ENCODE measurements at regions of chr6 and their contacts with region 1.

Region 1: GRCh38 chr6:4923081-4923480 is 80.8 kb downstream of the RPP40 start:
- DNase-seq: no peak
- ATAC-seq: no peak
- H3K4me3 ChIP-seq: no peak overlapping the region
- H3K27ac ChIP-seq: no peak overlapping the region
- H3K4me1 ChIP-seq: no peaks in the 10 kb centered on the region
- H3K27me3 ChIP-seq: no peaks in the 10 kb centered on the region
- CTCF ChIP-seq: no peak

Region 2: DNA sequence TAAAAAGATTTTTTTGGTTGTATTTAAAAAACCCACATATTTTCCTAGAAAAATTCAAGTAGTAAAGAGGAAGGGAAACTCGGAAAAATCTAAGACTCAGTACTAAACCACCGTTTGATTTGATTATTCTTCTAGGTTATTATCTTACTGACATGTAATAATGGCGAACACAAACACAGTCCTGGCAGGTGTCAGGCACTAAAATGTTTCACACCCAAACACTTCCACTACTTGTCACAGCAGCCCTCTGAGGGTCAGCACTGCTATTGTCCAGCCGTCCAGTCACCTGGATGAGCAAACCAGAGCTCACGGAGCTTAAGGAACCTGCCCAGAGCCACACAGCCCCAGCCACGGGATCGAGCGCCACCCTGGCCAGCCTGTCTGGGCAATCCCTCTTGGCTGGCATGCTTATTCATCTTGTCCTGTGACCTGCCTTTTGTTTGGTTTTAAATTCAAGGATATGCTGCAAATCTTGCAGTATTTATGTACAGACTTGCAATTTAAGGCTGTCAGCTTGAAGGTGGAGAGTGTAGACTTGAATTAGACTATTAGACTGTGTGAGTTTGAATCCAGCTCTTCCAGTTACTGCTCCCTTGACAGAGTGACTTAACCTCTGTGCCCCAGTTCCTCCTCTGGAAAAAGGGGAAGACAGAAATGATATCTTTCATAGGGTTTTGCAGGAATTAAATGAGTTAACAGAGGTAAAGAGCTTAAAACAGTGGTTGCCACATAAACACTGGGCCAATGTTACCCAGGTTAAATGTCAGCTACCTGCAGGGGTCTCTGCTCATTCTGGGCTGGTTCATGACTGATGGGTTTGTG is 64.7 kb before region 1 on chr6:
- CTCF ChIA-PET with region 1: no interaction called
- POLR2A ChIA-PET with region 1: interaction called, 12 read pairs
- in situ Hi-C with region 1: no loop called
- intact Hi-C with region 1: no loop called
- DNase-seq: no peak
- ATAC-seq: no peak
- H3K4me3 ChIP-seq: no peak overlapping the region
- H3K27ac ChIP-seq: no peak overlapping the region
- H3K4me1 ChIP-seq: no peaks in the 10 kb centered on the region
- H3K27me3 ChIP-seq: no peaks in the 10 kb centered on the region
- CTCF ChIP-seq: no peak

Measured in Panc1 (cell line).